ENCODE measurements at regions of chr11 and their contacts with region 1.

Region 1: GRCh38 chr11:27234043-27234668 is 128.9 kb downstream of the CCDC34 start:
- DNase-seq: peak; percentile 80
- H3K4me3 ChIP-seq: no peak overlapping the region
- H3K27ac ChIP-seq: no peak overlapping the region
- H3K4me1 ChIP-seq: peaks cover under 1% of the 10 kb centered on the region
- H3K27me3 ChIP-seq: no peaks in the 10 kb centered on the region
- CTCF ChIP-seq: no peak

Region 2: DNA sequence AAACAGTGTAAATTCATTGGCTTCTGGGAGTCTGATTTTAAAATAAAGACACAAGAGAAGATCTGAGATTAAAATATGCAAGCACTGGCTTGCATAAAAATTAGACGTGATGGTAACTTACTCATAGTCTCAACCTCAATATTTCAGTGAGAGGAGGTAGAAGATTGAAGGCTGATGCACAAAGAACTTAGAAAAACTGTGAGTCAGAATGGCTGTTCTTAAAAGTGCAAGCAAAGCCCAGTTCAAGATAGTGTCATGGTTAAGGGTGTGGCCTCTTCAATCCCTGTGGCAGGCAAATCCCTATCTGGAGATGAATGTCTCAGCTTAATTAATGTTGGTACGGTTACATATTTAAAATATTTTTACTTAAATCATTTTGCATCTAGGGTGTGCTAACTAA is 273.9 kb before region 1 on chr11:
- CTCF ChIA-PET with region 1: no interaction called
- dilution Hi-C with region 1: no loop called
- in situ Hi-C with region 1: no loop called
- intact Hi-C with region 1: no loop called
- DNase-seq: peak; percentile 95
- H3K4me3 ChIP-seq: no peak overlapping the region
- H3K27ac ChIP-seq: peak overlapping the region; percentile 23
- H3K4me1 ChIP-seq: peaks cover 9% of the 10 kb centered on the region
- H3K27me3 ChIP-seq: no peaks in the 10 kb centered on the region
- CTCF ChIP-seq: no peak

Region 3: GRCh38 chr11:27174021-27174420 is 60.1 kb before region 1 on chr11:
- CTCF ChIA-PET with region 1: no interaction called
- dilution Hi-C with region 1: no loop called
- in situ Hi-C with region 1: loop called in 1 of 2 experiments (anchors 10 kb)
- intact Hi-C with region 1: no loop called
- DNase-seq: peak; percentile 96
- H3K4me3 ChIP-seq: no peak overlapping the region
- H3K27ac ChIP-seq: peak overlapping the region; percentile 42
- H3K4me1 ChIP-seq: peaks cover 33% of the 10 kb centered on the region
- H3K27me3 ChIP-seq: no peaks in the 10 kb centered on the region
- CTCF ChIP-seq: no peak

Region 4: GRCh38 chr11:27187848-27188621 is 46.1 kb before region 1 on chr11:
- CTCF ChIA-PET with region 1: no interaction called
- dilution Hi-C with region 1: no loop called
- in situ Hi-C with region 1: no loop called
- intact Hi-C with region 1: no loop called
- DNase-seq: no peak
- H3K4me3 ChIP-seq: no peak overlapping the region
- H3K27ac ChIP-seq: no peak overlapping the region
- H3K4me1 ChIP-seq: peaks cover 10% of the 10 kb centered on the region
- H3K27me3 ChIP-seq: no peaks in the 10 kb centered on the region
- CTCF ChIP-seq: no peak

Region 5: DNA sequence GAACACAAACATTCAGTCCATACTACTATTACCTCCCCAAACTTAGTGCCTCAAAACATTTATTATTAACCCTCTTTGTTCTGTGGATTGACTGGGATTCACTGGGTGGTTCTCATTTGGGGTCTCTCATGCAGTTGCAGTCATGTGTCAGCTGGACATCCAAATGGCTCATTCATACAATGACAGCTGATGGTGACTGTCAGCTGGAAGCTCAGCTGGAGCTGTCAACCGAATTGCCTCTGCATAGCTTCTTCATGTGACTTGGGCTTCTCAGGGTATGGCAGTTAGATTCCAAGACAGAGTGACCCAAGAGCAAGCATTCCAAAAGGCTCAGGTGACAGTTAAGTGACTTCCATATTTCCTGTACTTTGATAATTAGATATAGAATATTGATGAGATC is 43.7 kb after region 1 on chr11:
- CTCF ChIA-PET with region 1: no interaction called
- dilution Hi-C with region 1: no loop called
- in situ Hi-C with region 1: no loop called
- intact Hi-C with region 1: no loop called
- DNase-seq: no peak
- H3K4me3 ChIP-seq: no peak overlapping the region
- H3K27ac ChIP-seq: no peak overlapping the region
- H3K4me1 ChIP-seq: no peaks in the 10 kb centered on the region
- H3K27me3 ChIP-seq: no peaks in the 10 kb centered on the region
- CTCF ChIP-seq: no peak